A673 (cell line): ENCODE measurements at regions of chr10 and their contacts with region 1.

Region 1: DNA sequence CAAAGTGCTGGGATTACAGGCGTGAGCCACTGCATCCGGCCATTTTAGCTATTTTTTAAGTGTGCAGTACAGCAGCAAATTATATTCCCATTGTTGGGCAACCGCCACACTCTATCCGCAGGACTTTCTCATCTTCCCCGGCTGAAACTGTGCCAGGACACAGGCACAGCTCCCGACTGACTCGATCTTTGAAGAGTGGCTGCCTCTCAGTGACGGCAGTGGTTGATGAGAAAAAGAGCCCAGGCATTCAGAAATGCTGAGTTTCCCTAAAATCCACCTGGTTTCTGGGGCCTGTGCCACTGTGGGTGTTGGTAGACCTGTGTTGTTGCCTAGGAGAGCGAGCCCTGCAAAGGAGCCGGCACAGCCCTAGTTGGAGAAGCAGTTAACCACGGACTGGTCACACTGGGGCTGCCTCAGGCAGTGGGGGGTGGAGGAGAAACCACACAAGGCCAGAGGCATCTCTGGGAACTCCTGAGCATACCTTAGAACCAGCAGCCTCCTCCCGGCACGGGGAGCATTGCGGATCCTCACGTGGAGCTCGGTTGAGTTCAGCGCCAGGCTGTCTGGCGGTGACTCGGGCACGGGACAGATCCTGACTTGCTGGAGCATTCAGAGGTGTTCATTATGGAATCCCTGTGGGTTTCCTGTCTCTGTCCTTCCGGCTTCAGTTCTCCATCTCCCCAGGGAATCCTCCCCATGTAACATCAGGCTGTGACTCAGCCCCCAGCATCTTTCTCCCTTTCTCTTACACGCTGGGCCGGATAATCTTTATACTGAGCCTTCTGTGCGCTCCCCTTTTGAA is 16.2 kb downstream of the PFKFB3 start:
- DNase-seq: peak; percentile 99
- H3K4me3 ChIP-seq: peak overlapping the region; percentile 8
- H3K27ac ChIP-seq: peak overlapping the region; percentile 95
- H3K4me1 ChIP-seq: peaks cover 65% of the 10 kb centered on the region
- H3K27me3 ChIP-seq: no peaks in the 10 kb centered on the region
- CTCF ChIP-seq: no peak

Region 2: DNA sequence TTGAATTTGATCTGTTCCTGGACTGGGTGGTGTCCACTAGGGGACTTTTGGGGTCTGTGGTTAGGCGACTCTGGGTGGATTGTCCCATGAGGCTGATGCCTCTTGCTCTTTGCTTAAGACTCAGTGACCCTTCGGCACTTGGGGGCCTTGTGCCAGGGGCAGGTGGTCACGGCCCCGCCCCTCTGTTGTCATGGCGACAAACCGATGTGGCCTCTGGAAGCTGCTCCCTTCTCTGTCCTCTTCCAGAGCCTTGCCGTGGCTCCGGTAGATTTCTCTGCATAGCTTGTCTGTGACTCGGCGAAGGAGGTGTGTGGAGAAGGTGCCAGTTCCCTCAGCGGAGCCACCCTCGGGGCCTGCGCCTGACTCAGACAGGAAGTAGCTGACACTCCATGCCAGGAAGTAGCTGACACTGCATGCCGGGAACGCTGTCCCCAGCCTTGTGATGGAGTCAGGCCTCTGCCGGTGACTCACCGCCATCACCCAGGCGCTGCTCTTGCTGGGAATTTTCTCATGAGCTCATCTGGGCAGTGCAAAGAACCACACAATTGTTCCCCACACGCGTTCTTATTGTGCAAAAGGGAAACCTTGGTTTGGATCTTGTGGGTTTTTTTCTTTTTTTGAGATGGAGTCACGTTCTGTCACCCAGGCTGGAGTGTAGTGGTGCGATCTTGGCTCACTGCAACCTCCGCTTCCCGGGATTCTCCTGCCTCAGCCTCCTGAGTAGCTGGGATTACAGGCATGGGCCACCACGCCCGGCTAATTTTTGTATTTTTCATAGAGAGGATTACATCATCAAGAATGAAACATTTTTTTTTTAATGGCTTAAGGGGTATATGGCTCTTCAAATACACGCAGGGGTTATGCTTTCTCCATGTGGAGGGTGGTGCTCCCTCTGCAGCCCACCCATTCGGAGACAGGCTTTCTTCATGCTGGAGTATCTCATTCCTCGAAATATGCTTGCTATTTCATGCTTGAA is 56.4 kb after region 1 on chr10:
- CTCF ChIA-PET with region 1: no interaction called
- POLR2A ChIA-PET with region 1: no interaction called
- intact Hi-C with region 1: loop called (anchors 5 kb)
- DNase-seq: peak; percentile 91
- H3K4me3 ChIP-seq: no peak overlapping the region
- H3K27ac ChIP-seq: no peak overlapping the region
- H3K4me1 ChIP-seq: peaks cover 24% of the 10 kb centered on the region
- H3K27me3 ChIP-seq: no peaks in the 10 kb centered on the region
- CTCF ChIP-seq: no peak